ENCODE measurements at regions of chr9 and their contacts with region 1.

Region 1: DNA sequence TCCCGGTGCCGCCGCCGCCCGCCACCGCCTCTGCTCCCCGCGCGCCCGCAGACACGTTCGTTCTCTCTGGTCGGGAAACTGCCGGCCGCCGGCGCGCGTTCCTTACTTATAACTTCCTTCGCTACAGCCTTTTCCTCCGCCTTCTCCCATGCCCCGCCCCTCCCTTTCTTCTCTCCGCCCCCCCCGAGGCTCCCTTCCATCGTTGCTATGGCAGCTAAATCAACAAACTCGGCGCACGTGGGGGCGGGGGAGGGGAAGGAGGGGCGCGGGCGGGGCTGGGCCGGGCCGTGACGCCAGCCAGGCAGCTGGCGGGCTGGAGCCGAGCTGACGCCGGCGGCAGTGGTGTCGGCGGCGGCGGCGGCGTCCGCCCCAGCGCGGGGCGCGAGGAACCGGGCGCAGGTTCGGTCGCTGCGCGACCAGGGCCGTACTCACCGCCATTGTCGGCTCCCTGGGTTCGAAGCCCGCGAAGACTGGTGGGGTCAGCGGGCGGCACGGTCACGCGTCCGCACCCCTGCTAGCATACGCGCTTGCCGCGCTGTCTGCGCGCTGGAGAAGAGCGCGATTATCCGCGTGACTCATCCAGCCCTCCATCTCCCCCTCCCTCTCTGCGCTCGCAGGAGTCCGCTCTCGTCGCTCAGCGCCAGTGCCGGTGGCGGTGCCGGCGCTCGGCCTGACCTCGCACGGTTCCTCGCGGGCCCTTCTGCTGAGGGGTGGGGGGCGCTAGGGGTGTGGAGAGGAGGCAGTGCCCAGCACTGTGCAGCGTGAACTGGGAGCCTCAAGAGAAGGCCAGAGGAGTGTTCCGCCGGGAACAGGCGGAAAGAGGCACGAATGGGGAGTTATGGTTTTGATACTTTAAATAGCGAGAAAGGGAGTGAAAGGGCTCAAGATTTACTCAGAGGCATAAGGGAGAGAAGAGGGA is at the start of gene KLF4:
- DNase-seq: peak; percentile 95
- H3K4me3 ChIP-seq: peak within 1 kb of the TSS; percentile 40
- H3K27ac ChIP-seq: peak within 1 kb of the TSS; percentile 60
- H3K4me1 ChIP-seq: peaks cover 28% of the 10 kb centered on the region
- H3K27me3 ChIP-seq: peaks cover 50% of the 10 kb centered on the region
- CTCF ChIP-seq: no peak
- total RNA-seq, gene KLF4: 0.28 and 0.49 TPM in 2 replicates

Region 2: DNA sequence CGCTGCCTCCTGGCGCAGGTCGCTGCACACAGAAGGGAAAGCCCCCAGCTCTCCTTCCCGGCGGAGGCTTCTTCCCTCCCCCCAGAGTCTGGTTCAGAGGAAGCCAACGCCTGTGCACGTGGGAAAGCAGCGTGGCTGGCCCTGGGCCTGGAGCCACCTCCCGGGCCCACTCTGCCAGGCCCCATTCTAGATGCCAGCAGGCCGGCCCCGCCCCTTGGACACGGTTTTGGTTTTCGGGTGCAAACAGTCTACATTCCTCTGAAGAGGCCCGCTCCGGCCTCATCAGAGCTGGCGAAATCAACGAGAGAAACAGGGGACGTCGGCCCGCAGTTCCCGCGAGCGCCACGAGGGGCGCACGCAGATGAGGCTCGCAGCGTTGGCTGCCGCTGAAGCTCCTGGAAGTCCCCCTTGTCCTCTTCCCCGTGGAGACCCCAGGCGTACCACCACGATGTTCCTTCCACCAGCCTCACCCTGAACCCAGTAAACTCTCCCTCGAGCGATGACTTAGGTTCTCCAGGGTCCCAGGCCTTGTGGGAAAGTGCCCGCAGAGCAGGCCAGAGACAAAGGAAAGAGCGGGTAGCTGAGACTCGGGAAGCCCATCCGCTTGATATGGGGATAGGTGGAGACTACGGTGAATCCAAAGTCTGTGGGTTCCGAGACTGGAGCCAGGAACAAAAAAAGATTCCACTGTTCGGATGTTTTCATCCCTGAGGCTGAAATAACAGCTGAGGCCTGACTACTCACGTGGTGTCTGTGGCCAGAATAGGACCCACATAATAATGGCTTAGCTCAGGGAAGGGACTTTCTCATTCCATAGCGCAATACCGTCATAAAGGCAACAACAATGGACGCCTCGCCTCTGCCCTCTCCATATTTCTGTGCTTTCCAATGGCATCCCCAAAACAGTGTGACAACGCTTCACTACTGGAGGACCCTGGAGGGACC is 64.6 kb before region 1 on chr9:
- CTCF ChIA-PET with region 1: no interaction called
- POLR2A ChIA-PET with region 1: no interaction called
- intact Hi-C with region 1: loop called (anchors 5 kb)
- DNase-seq: peak; percentile 73
- H3K4me3 ChIP-seq: no peak overlapping the region
- H3K27ac ChIP-seq: no peak overlapping the region
- H3K4me1 ChIP-seq: no peaks in the 10 kb centered on the region
- H3K27me3 ChIP-seq: no peaks in the 10 kb centered on the region
- CTCF ChIP-seq: peak; percentile 96

Region 3: GRCh38 chr9:107637421-107638420 is 147.8 kb after region 1 on chr9:
- CTCF ChIA-PET with region 1: no interaction called
- POLR2A ChIA-PET with region 1: no interaction called
- intact Hi-C with region 1: loop called (anchors 10 kb)
- DNase-seq: peak; percentile 54
- H3K4me3 ChIP-seq: peak overlapping the region; percentile 39
- H3K27ac ChIP-seq: no peak overlapping the region
- H3K4me1 ChIP-seq: peaks cover 6% of the 10 kb centered on the region
- H3K27me3 ChIP-seq: no peaks in the 10 kb centered on the region
- CTCF ChIP-seq: no peak

Measured in A673 (cell line).